ENCODE measurements at regions of chr2 and their contacts with region 1.

Region 1: DNA sequence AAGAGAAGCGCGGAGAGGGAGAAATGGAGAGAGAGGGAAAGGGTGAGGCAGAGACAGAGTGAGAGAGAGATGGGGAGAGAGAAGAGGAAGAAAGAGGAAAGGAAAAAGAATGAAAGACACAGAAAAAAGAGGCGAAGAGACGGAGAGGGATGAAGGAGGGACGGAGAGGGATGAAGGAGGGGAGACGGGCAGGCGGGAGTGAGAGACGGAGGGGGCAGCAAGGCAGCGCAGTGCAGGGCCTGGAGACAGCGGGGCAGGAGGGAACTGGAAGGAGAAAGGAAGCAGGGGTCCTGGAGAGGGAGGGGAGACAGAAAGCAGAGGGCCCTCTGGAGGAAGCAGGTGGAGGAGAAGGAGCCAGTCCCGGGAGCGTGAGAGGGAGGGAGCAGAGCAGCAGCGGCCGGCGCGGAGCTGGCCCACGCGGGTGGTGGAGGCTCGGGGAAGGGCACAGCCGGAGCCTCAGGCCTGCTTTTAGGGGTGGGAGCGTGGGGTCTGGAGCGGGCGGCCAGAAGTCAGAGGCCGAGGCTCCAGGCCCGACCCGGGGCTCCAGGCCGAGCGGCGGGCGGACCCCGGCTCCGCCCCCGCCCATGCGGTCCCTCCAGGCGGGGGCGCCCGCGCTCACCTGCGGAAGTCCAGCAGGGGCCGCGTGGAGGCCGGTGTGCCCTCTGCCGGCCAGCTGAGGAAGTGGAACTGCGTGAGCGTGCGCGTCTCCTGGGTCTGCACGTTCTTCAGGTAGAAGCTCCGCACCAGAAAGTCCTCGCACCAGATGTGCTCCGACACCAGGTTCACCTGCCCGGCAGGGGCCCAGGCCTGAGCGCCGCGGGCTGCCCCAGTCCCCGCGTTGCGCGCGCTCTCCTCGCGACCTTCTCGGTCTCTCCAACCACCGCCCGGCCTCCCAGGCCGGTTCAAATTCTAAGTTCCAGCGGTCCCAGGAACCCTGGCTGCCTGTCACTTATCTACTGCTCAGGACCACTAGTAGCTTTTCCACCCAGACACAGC is 14.5 kb downstream of the PTPRN start:
- DNase-seq: peak; percentile 74 to 96 (median 84)
- ATAC-seq: peak; percentile 90 to 98 (median 95)
- H3K4me3 ChIP-seq: peak overlapping the region; percentile 47 to 56
- H3K4me3 Mint-ChIP-seq: peak overlapping the region; percentile 41 to 73 (median 71)
- H3K27ac ChIP-seq: peak overlapping the region; percentile 55
- H3K27ac Mint-ChIP-seq: peak overlapping the region in 1 of 2 donors; percentile 66
- H3K4me1 ChIP-seq: peaks cover 3 to 39% of the 10 kb centered on the region in 2 experiments
- H3K4me1 Mint-ChIP-seq: peaks cover 26 to 34% (median 34%) of the 10 kb centered on the region in 3 donors
- H3K27me3 ChIP-seq: peaks cover 0 to 25% of the 10 kb centered on the region in 2 experiments
- H3K27me3 Mint-ChIP-seq: peaks cover 4 to 6% of the 10 kb centered on the region in 2 donors

Region 2: DNA sequence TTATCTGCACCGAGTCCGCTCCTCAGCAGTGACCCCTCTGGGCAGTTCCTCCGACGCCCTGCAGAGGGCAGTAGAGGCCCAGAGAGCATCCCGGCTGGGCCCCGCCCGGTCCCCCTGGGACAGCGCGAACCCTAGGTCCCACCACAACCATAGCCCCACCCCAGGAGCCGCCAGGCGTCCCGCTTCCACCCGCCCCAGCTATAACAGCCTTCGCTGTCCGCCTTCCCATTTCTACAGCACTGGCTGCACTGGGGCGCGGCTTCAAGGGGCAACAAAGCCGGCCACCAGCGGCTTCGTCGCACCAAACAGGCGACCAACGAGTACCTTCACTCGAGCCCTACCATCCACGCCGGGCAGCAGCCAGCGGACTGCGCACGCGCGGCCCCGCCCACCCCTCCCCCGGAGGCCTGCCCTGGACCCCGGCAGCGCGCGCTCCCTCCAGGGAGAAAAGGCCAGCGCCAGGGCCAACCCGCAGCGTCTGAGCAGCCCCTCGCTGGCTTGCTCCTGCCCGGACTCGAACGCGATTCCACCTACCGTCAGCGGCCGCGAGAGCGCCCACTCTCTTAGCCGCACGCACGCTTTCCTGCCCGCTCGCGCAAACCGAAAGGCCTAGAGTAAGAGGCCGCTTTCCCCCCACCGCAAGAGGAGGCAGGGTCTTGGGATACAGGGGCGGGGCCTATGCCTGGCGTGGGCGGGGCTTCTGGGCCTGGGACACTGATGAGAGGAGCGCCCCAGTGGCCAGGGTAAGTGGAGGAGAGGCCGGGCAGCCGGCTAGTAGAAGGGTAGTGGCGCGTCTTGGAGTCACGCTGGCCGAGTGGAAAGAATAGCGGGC is 134.3 kb before region 1 on chr2 and contains the start of gene NHEJ1:
- CTCF ChIA-PET with region 1: interaction called, 7 to 13 read pairs
- POLR2A ChIA-PET with region 1: no interaction called
- DNase-seq: peak; percentile 74 to 95 (median 86)
- ATAC-seq: peak; percentile 85 to 93 (median 86)
- H3K4me3 ChIP-seq: peak within 1 kb of the TSS; percentile 65 to 85
- H3K4me3 Mint-ChIP-seq: peak within 1 kb of the TSS; percentile 86 to 94 (median 88)
- H3K27ac ChIP-seq: peak within 1 kb of the TSS; percentile 68
- H3K27ac Mint-ChIP-seq: peak within 1 kb of the TSS; percentile 95 to 97
- H3K4me1 ChIP-seq: peaks cover 4 to 14% of the 10 kb centered on the region in 2 experiments
- H3K4me1 Mint-ChIP-seq: peaks cover 16 to 31% (median 22%) of the 10 kb centered on the region in 3 donors
- H3K27me3 ChIP-seq: no peaks in the 10 kb centered on the region
- H3K27me3 Mint-ChIP-seq: no peaks in the 10 kb centered on the region
- total RNA-seq, gene NHEJ1: 17.3 to 21.1 (median 18.2) TPM

Region 3: DNA sequence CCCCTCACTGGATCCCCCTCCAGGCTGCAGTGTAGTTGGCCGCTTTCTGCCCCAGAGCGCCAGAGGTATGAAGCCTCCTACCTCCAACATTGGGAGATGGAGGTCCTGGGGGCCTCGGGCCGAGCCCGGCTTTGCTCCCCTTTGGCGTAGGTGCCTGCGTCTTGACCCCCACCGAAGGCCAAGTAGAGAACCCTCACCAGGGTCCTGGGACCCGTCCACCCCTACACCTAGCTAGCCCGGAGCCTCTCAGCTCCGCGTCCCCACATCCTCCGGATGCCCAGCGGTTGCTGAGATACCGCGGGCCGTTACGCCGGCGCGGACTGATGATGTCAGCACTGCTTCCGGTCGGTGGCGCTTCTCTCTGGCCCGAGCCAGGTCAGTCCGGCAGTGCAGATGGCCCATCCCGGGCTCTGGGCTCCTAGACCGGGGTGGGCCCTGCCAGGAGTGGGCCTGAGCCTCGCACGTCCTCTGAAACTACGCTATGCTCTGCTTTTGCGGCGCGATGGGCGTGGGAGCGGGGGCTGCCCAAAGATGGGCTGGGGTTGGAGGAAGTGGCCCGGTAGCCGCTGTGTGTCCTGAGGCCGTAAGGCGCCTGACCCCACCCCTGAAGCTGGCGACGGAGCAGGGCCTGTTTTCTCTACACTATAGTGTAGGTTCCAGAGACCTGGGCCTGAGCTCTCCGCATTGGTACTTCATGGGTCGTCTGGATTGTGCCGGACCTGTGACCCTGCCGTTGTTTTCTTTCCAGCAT is 49.3 kb before region 1 on chr2 and contains the starts of genes GLB1L and STK16:
- CTCF ChIA-PET with region 1: interaction called, 3 to 14 read pairs
- POLR2A ChIA-PET with region 1: no interaction called
- DNase-seq: peak; percentile 63 to 93 (median 81)
- ATAC-seq: peak; percentile 56 to 70 (median 66)
- H3K4me3 ChIP-seq: peak within 1 kb of the TSS; percentile 89 to 90
- H3K4me3 Mint-ChIP-seq: peak within 1 kb of the TSS; percentile 75 to 92 (median 87)
- H3K27ac ChIP-seq: peak within 1 kb of the TSS; percentile 94
- H3K27ac Mint-ChIP-seq: peak within 1 kb of the TSS; percentile 98 to 99
- H3K4me1 ChIP-seq: peaks cover 42 to 62% of the 10 kb centered on the region in 2 experiments
- H3K4me1 Mint-ChIP-seq: peaks cover 56 to 66% (median 59%) of the 10 kb centered on the region in 3 donors
- H3K27me3 ChIP-seq: no peaks in the 10 kb centered on the region
- H3K27me3 Mint-ChIP-seq: no peaks in the 10 kb centered on the region
- total RNA-seq, gene GLB1L: 1.1 to 3.0 (median 1.8) TPM
- total RNA-seq, gene STK16: 19.3 to 26.6 (median 21.3) TPM

Region 4: GRCh38 chr2:219253753-219254590 is 40.7 kb before region 1 on chr2 and contains the start of gene TUBA4A:
- CTCF ChIA-PET with region 1: interaction called, 8 to 29 read pairs
- POLR2A ChIA-PET with region 1: interaction called in 1 of 2 experiments, 3 read pairs
- DNase-seq: peak; percentile 82 to 96 (median 89)
- ATAC-seq: peak; percentile 77 to 87 (median 78)
- H3K4me3 ChIP-seq: peak within 1 kb of the TSS; percentile 95 to 99
- H3K4me3 Mint-ChIP-seq: peak within 1 kb of the TSS; percentile 75 to 96 (median 83)
- H3K27ac ChIP-seq: peak within 1 kb of the TSS; percentile 94
- H3K27ac Mint-ChIP-seq: peak within 1 kb of the TSS; percentile 98 to 99
- H3K4me1 ChIP-seq: peaks cover 25 to 47% of the 10 kb centered on the region in 2 experiments
- H3K4me1 Mint-ChIP-seq: peaks cover 47 to 48% (median 48%) of the 10 kb centered on the region in 3 donors
- H3K27me3 ChIP-seq: no peaks in the 10 kb centered on the region
- H3K27me3 Mint-ChIP-seq: no peaks in the 10 kb centered on the region
- total RNA-seq, gene TUBA4A: 108 to 196 (median 121) TPM

Region 5: DNA sequence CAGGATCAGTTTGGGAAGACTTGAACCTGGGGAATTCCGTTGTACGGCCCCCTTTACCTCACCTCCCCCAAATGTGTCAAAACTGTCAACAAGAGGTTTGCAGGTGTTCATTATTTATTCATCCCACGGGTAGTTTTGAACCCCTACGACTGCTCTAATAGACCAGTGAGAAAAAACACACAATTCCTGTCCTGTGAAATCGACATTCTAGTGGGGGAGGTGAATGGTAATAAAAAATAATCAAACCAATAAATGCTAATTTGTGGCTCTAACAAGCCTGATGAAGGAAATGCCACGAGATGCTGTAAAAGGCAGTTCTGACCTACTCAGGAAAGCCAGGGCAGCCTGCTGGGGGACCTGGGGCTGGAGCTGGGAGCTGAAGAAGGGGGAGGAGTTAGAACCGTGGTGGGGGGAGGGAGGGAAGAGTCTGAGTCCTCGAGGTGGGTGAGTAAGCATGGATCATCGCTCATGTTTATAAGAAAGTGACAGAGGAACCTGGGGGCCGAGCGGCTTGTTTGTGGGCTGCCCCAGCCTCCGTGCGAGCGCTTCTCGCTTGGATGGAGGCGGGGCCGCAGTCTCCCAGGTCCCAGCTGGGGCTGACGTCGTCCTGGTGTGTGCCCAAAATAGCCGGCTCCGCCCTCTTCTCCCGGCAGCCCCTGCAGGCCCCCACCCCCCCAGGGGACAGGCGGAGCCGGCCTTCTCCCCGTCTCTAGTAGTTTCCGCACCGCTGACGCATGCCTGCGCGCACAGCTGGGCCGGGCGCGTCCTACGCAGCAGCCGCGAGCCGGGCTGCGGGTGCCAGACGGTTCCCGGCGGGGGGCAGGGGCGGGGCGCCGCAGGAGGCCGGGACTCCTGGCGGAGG is 15.8 kb before region 1 on chr2 and contains the start of gene DNAJB2:
- CTCF ChIA-PET with region 1: interaction called, 78 to 116 read pairs
- POLR2A ChIA-PET with region 1: interaction called, 4 to 5 read pairs
- DNase-seq: peak; percentile 91 to 100 (median 99)
- ATAC-seq: peak; percentile 82 to 93 (median 92)
- H3K4me3 ChIP-seq: peak within 1 kb of the TSS; percentile 76 to 93
- H3K4me3 Mint-ChIP-seq: peak within 1 kb of the TSS; percentile 85 to 98 (median 97)
- H3K27ac ChIP-seq: peak within 1 kb of the TSS; percentile 100
- H3K27ac Mint-ChIP-seq: peak within 1 kb of the TSS; percentile 99
- H3K4me1 ChIP-seq: peaks cover 11 to 42% of the 10 kb centered on the region in 2 experiments
- H3K4me1 Mint-ChIP-seq: peaks cover 43 to 54% (median 49%) of the 10 kb centered on the region in 3 donors
- H3K27me3 ChIP-seq: no peaks in the 10 kb centered on the region
- H3K27me3 Mint-ChIP-seq: no peaks in the 10 kb centered on the region
- total RNA-seq, gene DNAJB2: 83.0 to 150 (median 91.8) TPM

Region 6: DNA sequence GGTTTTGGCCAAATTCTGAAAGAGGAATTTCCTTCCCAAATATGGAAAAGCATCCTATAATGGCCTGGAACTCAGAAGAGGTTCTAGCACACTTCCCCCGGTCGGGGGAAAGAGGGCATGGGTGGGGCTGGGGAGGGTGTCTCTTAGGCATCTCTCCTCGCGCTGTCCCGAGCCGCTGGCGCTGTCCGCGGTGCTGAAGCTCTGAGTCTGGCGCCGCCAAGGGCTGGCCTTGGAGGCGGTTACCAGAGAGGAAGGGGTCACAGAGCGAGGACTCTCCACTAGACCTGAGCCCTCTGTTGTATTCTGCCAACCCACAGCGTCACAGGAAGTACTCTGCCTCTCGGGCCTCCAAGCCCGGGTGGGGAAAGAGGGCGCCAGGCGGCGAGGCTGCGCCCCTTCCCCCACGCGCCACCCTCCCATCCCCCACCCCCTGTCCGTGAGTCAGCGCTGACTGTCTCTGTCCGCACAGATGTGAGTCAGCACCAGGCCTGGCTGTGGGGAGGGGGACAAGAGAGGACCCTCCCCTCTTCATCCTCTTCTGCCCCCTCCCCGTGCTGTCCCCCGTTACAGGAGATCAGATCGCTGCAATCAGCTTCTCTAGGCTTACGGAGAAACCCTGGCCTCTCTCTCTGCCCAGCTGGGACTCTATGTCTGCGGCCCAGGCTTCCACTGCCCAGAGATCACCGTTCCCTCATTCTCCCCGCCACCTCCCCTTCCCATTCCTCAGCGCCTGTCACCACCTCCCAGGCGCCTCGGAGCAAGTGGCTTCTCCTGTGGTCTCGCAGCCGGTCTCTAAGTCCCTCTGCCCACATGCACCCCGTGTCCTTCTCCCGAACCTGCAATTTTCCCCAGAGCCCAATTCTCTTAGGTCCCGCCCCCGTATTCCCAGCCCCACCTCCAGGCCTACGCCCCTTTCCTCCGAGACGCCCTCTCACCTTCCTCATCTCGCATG is 13.8 kb after region 1 on chr2:
- CTCF ChIA-PET with region 1: interaction called, 3 to 11 read pairs
- POLR2A ChIA-PET with region 1: no interaction called
- DNase-seq: peak in 34 of 35 experiments; percentile 25 to 79 (median 58)
- ATAC-seq: peak; percentile 70 to 85 (median 75)
- H3K4me3 ChIP-seq: no peak overlapping the region
- H3K4me3 Mint-ChIP-seq: no peak overlapping the region
- H3K27ac ChIP-seq: no peak overlapping the region
- H3K27ac Mint-ChIP-seq: no peak overlapping the region
- H3K4me1 ChIP-seq: peaks cover 0 to 6% of the 10 kb centered on the region in 2 experiments
- H3K4me1 Mint-ChIP-seq: peaks cover 0 to 9% (median 3%) of the 10 kb centered on the region in 3 donors
- H3K27me3 ChIP-seq: peaks cover 4 to 42% of the 10 kb centered on the region in 2 experiments
- H3K27me3 Mint-ChIP-seq: peaks cover 51 to 67% of the 10 kb centered on the region in 2 donors

Region 7: DNA sequence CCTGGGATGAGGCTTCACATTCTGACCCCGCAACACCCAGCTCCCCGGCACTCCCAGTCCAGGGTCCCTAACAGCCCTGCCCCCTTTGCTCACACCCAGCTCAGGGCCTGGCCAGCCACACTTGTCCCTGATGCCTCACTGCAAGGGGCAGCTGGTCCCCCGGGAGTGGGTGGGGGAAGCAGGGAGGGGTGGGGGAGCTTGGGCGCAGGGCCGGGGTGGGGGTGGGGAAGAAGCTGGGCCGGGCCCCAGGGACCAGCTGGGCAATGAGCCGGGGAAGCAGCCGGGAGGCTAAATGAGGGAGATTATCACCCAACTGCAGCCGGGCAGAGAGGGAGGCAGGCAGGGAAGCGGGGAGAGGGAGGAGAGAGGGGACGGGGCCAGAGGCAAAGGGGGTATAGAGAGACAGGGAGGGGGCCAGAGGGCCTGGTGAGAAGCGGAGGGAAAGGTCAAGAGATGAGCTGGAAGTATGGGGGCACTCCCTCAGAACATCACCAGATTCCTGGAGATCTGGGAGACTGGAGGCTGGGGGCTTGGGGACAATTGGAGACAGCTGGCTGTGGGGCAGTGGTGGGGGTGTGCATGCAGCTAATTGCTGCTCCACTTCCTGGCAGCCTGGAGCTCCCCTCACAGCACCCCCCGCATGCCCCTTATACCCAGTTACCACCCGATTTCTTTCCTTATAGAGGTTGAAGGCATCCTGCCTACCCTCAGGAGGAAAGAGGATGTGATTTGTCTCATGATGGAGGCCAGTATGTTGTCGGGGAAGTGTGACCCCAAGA is 217.1 kb after region 1 on chr2:
- CTCF ChIA-PET with region 1: no interaction called
- POLR2A ChIA-PET with region 1: interaction called, 5 to 12 read pairs
- DNase-seq: no peak
- ATAC-seq: no peak
- H3K4me3 ChIP-seq: no peak overlapping the region
- H3K4me3 Mint-ChIP-seq: no peak overlapping the region
- H3K27ac ChIP-seq: no peak overlapping the region
- H3K27ac Mint-ChIP-seq: peak overlapping the region in 1 of 2 donors; percentile 45
- H3K4me1 ChIP-seq: peaks cover 3 to 27% of the 10 kb centered on the region in 2 experiments
- H3K4me1 Mint-ChIP-seq: peaks cover 26 to 35% (median 27%) of the 10 kb centered on the region in 3 donors
- H3K27me3 ChIP-seq: peaks cover 8 to 95% of the 10 kb centered on the region in 2 experiments
- H3K27me3 Mint-ChIP-seq: peaks cover 57 to 72% of the 10 kb centered on the region in 2 donors